ENCODE measurements at regions of chr3 and their contacts with region 1.

Region 1: GRCh38 chr3:109081746-109082510 is 36.0 kb downstream of the MORC1 start:
- DNase-seq: peak in 1 of 2 donors; percentile 6
- ATAC-seq: peak in 2 of 8 donors; percentile 51 to 53
- H3K4me3 ChIP-seq: no peak overlapping the region
- H3K27ac ChIP-seq: no peak overlapping the region
- H3K4me1 ChIP-seq: no peaks in the 10 kb centered on the region
- H3K27me3 ChIP-seq: no peaks in the 10 kb centered on the region
- CTCF ChIP-seq: peak; percentile 36 to 67 (median 58)

Region 2: DNA sequence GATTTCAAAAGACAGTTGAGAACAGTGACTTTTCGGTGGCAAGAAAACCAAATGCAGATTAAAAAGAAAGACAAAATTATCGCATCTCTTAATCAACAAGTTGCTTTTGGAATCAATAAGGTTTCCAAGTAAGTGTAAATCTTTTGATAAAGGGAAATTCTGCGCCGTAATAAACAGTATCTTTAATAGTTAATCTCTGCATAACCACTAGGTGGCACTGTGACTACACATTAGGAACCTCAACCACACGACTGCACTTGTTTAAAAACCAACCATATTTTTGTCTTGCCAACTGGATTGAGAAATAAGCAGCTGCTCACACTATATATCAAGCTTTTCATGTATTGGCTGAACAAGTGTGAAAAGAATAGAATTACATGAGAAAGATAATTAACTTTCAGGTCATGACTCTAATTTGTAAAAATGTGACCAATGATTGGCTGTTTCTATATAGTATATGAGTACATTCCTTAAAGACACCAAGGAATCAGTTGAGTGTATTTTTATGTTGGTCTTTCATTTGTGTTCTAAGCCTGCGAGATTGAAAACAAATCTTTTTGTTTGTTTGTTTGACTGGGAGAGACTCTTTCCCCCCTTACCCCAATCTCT is 419.7 kb before region 1 on chr3:
- intact Hi-C with region 1: loop called in 2 of 10 experiments (anchors 5 to 10 kb)
- DNase-seq: peak in 1 of 2 donors; percentile 14
- ATAC-seq: peak in 7 of 8 donors; percentile 58 to 78 (median 65)
- H3K4me3 ChIP-seq: peak overlapping the region in 2 of 10 donors; percentile 8 to 10
- H3K27ac ChIP-seq: no peak overlapping the region
- H3K4me1 ChIP-seq: peaks cover 0 to 6% (median 0%) of the 10 kb centered on the region in 9 donors
- H3K27me3 ChIP-seq: no peaks in the 10 kb centered on the region
- CTCF ChIP-seq: peak; percentile 52 to 84 (median 78)

Region 3: GRCh38 chr3:109023656-109024254 is 58.2 kb before region 1 on chr3:
- intact Hi-C with region 1: loop called in 6 of 10 experiments (anchors 2 to 10 kb)
- DNase-seq: peak in 1 of 2 donors; percentile 13
- ATAC-seq: no peak
- H3K4me3 ChIP-seq: no peak overlapping the region
- H3K27ac ChIP-seq: no peak overlapping the region
- H3K4me1 ChIP-seq: no peaks in the 10 kb centered on the region
- H3K27me3 ChIP-seq: peaks cover 0 to 2% (median 0%) of the 10 kb centered on the region in 7 donors
- CTCF ChIP-seq: peak; percentile 31 to 78 (median 72)